ENCODE measurements at regions of chr14 and their contacts with region 1.

Region 1: DNA sequence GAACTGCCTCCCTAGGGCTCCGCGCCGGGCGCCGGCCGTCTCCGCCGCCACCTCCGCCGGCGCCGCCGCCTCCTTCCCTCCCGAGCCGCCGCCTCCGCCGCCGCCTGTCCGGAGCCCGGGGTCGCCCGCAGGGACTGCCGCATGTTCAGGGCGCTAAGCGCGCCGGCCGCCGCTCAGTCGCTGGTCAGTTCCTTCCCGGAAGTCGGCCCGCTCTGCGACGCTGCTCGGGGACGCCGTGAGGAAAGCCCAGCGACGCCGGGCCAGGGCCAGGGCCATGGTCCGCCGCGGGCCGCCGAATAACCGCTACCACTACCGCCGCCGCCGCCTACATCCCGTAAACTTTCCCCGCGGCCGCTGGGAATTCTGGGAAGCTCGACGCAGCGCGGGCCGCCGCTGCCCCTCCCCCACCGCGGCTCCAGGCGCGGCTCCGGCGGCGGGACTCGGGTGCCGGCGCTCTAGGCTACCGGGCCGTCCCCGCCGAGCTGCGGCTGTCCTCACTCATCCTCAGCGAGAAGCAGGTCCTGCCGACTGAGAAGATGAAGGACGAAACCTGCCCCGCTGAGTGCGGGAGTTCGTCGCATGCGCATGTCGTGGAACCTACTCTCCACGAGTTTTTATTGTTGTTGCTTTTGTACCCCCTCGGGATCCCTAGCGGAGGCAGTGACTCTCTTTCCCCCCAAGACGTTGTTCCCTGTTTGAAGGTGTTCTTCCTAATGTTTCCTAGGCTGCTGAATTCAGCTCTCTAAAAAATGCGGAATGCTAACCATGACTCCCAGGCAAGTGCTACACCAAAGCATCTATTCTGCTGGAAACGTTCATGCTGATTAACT is at the start of gene SAV1:
- DNase-seq: peak; percentile 55 to 93 (median 83)

Region 2: DNA sequence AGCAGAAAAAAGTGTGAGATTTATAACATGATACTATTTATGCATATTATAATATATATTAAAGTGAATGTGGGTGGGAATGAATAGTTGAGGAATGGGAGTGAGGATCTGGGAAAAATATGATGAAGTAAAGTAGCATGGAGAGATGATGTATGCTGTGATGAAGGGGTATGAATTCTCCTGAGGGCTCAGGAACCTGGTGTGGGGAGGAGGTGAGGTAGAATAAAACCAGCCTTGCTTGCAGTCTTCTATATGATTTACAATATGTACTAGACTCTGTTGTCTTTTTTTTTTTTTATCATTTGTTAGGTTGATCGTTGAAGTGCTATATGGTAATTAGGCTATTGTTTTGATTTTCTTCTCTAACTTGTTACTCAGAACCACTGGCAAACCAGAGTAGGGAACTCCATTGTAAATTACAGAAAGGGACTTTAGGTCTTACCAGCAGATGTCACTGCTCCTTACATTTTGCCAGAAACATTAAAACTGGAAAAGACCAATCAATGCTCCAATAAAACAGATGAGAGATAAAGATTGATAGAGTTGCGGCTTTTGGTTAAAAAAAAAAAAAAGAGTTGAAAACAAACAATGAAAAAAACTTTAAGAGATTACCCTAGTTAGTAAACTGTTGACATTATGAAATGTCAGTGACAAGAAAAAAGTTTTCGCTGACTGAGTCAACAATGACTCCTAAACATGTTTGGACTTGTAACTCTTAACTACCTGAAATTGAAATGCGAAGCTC is 68.3 kb before region 1 on chr14:
- intact Hi-C with region 1: loop called (anchors 10 kb)
- DNase-seq: peak in 5 of 42 donors; percentile 15 to 58 (median 36)

Region 3: GRCh38 chr14:50714450-50715073 is 46.4 kb after region 1 on chr14:
- intact Hi-C with region 1: loop called (anchors 5 kb)
- DNase-seq: peak in 12 of 42 donors; percentile 22 to 67 (median 38)